Heart right ventricle (tissue), 16 donors: ENCODE measurements at regions of chr15 and their contacts with region 1.

Region 1: GRCh38 chr15:62896978-62897647 is 145.4 kb upstream of the TPM1 start:
- DNase-seq: peak; percentile 89 to 93
- ATAC-seq: peak; percentile 81 to 91 (median 86)
- H3K4me3 ChIP-seq: peak overlapping the region in 5 of 10 donors; percentile 5 to 21 (median 16)
- H3K27ac ChIP-seq: peak overlapping the region; percentile 66 to 93 (median 88)
- H3K4me1 ChIP-seq: peaks cover 10 to 76% (median 59%) of the 10 kb centered on the region in 9 donors
- H3K27me3 ChIP-seq: no peaks in the 10 kb centered on the region
- CTCF ChIP-seq: no peak

Region 2: DNA sequence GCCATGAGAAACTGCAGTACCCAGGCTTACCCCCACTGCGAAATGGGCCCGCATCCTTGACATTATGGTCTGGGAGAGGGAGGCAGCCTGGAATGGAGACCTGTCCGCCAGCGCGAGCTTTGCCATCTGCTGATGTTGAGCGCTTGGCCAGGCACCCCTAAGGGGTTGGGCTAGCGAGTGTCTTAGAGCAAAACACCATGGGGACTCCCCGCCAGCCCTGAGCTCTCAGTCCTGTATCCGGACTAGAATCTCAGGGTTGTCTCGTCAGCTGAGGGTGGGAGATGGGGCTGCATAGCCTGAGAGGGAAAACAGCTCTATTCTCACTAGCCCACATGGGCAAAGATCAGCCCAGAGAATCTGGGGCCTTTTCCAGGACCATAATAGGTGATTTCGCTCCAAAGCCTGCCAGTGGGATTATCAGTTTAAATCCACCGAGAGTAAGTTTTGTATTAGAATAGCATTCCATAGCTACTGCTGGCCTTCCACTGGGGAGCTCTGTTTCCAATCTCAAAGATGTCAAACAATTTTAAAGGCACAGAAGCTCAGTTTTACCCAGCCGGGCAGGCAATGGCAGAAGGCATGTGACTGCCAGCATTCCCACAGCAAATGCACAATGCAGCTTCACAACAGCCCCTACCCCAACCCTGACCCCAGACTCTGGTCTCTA is 22.0 kb before region 1 on chr15:
- intact Hi-C with region 1: loop called in 1 of 10 experiments (anchors 1 kb)
- DNase-seq: peak in 1 of 2 donors; percentile 23
- ATAC-seq: peak; percentile 41 to 80 (median 66)
- H3K4me3 ChIP-seq: no peak overlapping the region
- H3K27ac ChIP-seq: peak overlapping the region in 7 of 10 donors; percentile 20 to 84 (median 77)
- H3K4me1 ChIP-seq: peaks cover 0 to 32% (median 15%) of the 10 kb centered on the region in 9 donors
- H3K27me3 ChIP-seq: no peaks in the 10 kb centered on the region
- CTCF ChIP-seq: no peak

Region 3: DNA sequence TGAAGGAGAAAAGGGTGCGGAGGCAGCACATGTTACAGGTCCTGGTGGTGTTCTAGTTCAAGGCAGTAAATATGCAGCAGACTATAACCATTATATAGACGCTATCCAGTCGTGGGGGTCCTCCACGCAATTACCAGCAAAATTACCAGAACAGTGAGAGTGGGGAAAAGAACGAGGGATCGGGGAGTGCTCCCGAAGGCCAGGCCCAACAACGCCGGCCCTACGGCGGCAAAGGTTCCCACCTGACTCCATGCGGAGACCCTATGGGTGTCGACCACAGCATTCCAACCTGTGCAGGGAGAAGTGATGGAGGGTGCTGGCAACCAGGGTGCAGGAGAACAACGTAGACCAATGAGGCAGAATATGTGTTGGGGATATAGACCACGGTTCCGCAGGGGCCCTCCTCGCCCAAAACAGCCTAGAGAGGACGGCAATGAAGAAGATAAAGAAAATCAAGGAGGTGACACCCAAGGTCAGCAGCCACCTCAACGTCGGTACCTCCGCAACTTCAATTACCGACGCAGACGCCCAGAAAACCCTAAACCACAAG is 56.5 kb after region 1 on chr15:
- intact Hi-C with region 1: loop called in 1 of 10 experiments (anchors 2 kb)
- DNase-seq: no peak
- ATAC-seq: no peak
- H3K4me3 ChIP-seq: no peak overlapping the region
- H3K27ac ChIP-seq: no peak overlapping the region
- H3K4me1 ChIP-seq: peaks cover 3 to 30% (median 18%) of the 10 kb centered on the region in 9 donors
- H3K27me3 ChIP-seq: peaks cover 0 to 5% (median 0%) of the 10 kb centered on the region in 7 donors
- CTCF ChIP-seq: no peak

Region 4: DNA sequence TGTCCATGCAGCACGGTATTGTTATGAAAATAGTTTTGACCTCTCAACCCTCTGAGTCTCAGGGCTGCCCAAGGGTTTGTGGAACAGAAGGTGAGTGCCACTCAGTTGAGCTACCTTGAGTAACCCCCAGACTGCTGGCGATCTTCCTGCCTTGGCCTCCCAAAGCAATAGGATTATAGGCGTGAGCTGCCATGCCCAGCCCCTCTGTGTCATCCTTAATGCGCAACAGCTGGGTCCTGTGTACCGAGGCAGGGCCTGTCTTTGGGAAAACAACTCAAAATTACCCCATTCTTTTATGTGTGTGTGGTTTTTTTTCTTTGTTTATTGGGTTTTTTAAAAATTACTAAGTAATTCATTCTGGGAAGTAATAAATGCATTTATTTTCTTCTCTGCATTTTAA is 67.1 kb after region 1 on chr15:
- intact Hi-C with region 1: no loop called
- DNase-seq: no peak
- ATAC-seq: no peak
- H3K4me3 ChIP-seq: no peak overlapping the region
- H3K27ac ChIP-seq: no peak overlapping the region
- H3K4me1 ChIP-seq: peaks cover 0 to 11% (median 0%) of the 10 kb centered on the region in 9 donors
- H3K27me3 ChIP-seq: no peaks in the 10 kb centered on the region
- CTCF ChIP-seq: no peak

Region 5: DNA sequence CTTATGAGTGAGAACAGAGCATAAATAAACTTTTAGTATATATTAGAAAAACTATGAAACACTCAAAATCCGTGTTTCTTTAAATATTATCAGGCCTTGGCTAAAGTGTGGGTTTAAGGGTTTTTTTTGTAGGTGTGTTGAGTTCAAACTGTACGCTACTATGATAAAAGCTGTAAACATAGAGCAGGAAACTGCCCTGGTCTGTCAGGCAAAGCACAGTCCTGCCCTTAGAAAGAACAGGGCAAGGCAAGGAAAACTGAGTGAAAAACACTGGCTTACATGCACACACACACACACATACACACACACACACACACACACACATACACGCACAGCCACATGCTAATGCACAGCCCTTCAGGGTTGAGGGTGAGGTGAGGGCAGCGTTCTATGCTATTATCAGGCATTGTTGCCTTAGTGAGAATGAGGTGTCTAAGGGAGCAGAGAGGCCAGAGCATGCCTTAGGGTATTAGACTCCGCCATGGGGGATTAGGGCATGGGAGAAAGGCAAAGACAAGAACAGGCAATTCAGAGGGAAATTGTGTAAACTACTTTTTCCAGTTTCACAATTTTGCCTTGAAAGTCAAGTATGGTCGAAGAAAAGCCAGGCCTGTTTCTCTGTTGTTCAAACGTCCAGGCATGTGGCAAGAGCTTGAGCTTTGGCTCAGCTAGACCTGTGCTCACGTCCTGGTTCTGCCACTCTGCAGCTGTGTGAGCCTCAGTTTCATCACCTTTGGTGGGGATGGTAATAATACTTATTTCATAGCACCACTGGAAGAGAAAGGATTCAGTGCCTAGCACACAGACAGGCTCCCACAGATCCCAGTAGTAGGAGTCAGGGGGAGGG is 109.1 kb after region 1 on chr15:
- intact Hi-C with region 1: loop called in 1 of 10 experiments (anchors 5 kb)
- DNase-seq: no peak
- ATAC-seq: peak in 6 of 8 donors; percentile 49 to 81 (median 66)
- H3K4me3 ChIP-seq: no peak overlapping the region
- H3K27ac ChIP-seq: no peak overlapping the region
- H3K4me1 ChIP-seq: peaks cover 0 to 7% (median 0%) of the 10 kb centered on the region in 9 donors
- H3K27me3 ChIP-seq: no peaks in the 10 kb centered on the region
- CTCF ChIP-seq: no peak